Heart right ventricle (tissue), 16 donors: ENCODE measurements at regions of chr3 and their contacts with region 1.

Region 1: DNA sequence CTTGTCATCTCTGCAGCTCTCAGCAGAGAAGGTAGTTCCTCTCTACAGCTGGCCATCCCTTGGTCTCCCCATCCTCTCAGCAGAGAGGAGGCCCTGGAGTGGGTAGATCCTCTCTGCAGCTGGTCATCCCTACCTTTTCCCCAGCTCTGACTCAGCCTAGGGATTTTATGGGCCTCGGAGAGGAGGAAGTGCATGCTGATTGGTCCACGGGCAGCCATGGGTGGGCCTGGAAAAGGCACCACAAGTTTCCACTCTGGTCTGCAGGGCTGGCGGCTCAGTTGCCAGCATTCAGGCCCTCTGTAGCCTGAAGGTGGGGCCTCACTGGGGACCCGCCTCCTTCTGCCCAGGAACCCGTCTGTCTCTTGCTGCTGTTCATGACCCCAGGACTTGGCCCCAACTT is 36.9 kb downstream of the NR1D2 start:
- DNase-seq: no peak
- ATAC-seq: peak; percentile 31 to 70 (median 41)
- H3K4me3 ChIP-seq: no peak overlapping the region
- H3K27ac ChIP-seq: no peak overlapping the region
- H3K4me1 ChIP-seq: peaks cover 0 to 36% (median 18%) of the 10 kb centered on the region in 9 donors
- H3K27me3 ChIP-seq: no peaks in the 10 kb centered on the region
- CTCF ChIP-seq: no peak

Region 2: GRCh38 chr3:23834082-23834870 is 147.7 kb before region 1 on chr3:
- intact Hi-C with region 1: no loop called
- DNase-seq: no peak
- ATAC-seq: peak in 1 of 8 donors; percentile 23
- H3K4me3 ChIP-seq: no peak overlapping the region
- H3K27ac ChIP-seq: peak overlapping the region in 1 of 10 donors; percentile 13
- H3K4me1 ChIP-seq: peaks cover 0 to 66% (median 49%) of the 10 kb centered on the region in 9 donors
- H3K27me3 ChIP-seq: no peaks in the 10 kb centered on the region
- CTCF ChIP-seq: peak in 6 of 9 donors; percentile 25 to 50 (median 38)

Region 3: GRCh38 chr3:23888617-23889228 is 93.2 kb before region 1 on chr3:
- intact Hi-C with region 1: loop called in 1 of 10 experiments (anchors 10 kb)
- DNase-seq: no peak
- ATAC-seq: peak in 3 of 8 donors; percentile 27 to 44 (median 39)
- H3K4me3 ChIP-seq: no peak overlapping the region
- H3K27ac ChIP-seq: no peak overlapping the region
- H3K4me1 ChIP-seq: peaks cover 0 to 25% (median 14%) of the 10 kb centered on the region in 9 donors
- H3K27me3 ChIP-seq: no peaks in the 10 kb centered on the region
- CTCF ChIP-seq: peak; percentile 65 to 89 (median 83)

Region 4: DNA sequence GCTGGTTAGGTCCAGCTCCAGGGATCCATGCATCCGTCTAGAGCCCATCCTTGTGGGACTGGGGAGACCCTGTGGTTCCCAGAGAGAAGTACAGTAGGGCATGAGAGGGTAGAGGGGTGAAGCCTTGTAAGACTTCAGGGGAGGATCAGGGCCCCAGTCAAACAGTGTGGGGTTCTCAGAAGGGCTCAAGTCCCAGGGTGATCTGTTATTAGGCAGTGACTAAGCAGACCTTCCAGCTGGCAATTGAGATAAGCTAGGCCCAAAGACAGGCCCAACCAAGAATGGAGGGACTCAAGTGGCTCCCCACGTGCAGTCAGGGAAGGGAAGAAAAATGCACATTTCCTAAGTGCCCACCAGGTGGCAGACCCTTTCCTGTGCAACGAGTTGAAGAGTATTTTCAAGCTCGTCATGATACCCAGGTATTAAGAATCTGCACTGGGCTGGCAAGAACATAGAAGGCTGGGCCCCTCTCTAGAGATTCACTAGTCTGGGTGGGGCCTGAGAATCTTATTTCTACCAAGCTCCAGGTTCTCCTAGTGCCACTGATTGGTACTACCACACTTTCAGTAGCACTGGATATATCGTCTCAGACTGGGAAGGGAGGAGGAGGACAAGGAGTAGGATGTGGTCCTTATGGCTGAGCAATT is 203.9 kb after region 1 on chr3:
- intact Hi-C with region 1: no loop called
- DNase-seq: peak in 1 of 2 donors; percentile 42
- ATAC-seq: peak; percentile 42 to 92 (median 76)
- H3K4me3 ChIP-seq: no peak overlapping the region
- H3K27ac ChIP-seq: peak overlapping the region in 2 of 10 donors; percentile 2 to 36
- H3K4me1 ChIP-seq: peaks cover 0 to 22% (median 0%) of the 10 kb centered on the region in 9 donors
- H3K27me3 ChIP-seq: no peaks in the 10 kb centered on the region
- CTCF ChIP-seq: peak; percentile 23 to 74 (median 59)